ENCODE measurements at regions of chr15 and their contacts with region 1.

Region 1: DNA sequence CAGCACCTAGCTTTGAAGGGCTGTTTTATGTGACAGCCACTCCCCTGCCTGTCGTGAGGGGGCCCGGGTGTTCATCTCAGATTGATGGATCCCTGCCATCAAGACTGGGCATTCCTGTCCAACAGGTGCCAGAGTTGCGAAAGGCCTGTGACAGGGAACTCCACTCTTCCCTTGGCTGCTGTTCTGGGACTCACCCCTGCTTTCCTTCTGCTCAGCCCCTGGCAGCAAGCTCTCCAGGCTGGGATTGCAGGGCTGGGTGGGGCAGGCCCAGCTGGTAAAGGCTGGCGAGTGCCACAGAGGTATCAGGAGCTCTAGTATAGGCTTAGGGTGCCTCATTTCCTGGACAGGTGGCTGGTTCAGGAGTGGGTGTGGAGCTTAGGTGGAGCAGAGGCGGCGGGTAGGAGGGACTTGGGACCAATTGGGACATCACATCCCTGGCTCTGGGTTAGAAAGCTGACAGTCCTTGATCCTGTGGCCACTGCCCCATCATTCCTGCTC is at the start of gene PLA2G4B:
- DNase-seq: no peak
- total RNA-seq, gene PLA2G4B: 1.5 to 4.0 TPM

Region 2: GRCh38 chr15:41819455-41820050 is 18.9 kb before region 1 on chr15:
- intact Hi-C with region 1: loop called in 1 of 2 experiments (anchors 1 kb)
- DNase-seq: no peak